ENCODE measurements at regions of chr3 and their contacts with region 1.

Region 1: GRCh38 chr3:86309369-86309768 is 681.6 kb downstream of the VGLL3 start:
- DNase-seq: no peak
- H3K4me3 Mint-ChIP-seq: no peak overlapping the region
- H3K27ac Mint-ChIP-seq: no peak overlapping the region
- H3K4me1 Mint-ChIP-seq: no peaks in the 10 kb centered on the region
- H3K27me3 Mint-ChIP-seq: no peaks in the 10 kb centered on the region

Region 2: DNA sequence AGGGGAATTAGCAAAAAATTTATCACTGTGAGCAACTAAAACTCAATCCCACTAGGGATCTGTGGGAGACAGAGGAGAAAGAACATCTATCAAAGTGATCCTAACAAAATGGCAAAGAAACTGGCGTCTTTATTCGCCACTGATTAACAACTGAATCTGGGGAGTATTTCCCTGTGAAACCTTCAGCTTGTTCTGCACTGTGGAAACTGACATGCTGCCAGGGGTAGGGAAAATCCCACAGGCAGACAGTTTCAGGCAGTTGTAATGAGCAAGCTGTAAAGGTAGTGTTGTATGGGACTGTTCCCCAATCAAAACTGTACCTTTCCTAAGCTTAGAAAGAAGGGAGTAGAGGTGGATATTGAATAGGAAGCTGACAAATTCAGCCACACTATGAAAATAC is 69.9 kb after region 1 on chr3:
- intact Hi-C with region 1: loop called (anchors 2 kb)
- DNase-seq: no peak
- H3K4me3 Mint-ChIP-seq: no peak overlapping the region
- H3K27ac Mint-ChIP-seq: no peak overlapping the region
- H3K4me1 Mint-ChIP-seq: no peaks in the 10 kb centered on the region
- H3K27me3 Mint-ChIP-seq: no peaks in the 10 kb centered on the region

Measured in activated T-helper 2 cell treated with anti-CD3 and anti-CD28 coated beads, Interferon-gamma antibody, Interleukin-2, Interleukin-4, amounts not matched to agents 10 μg/mL and 5 μg/mL and 100 μg/mL, durations not matched to agents 14 hours and 24 hours and 36 hours (primary cell).